Esophagus muscularis mucosa (tissue), 4 donors: ENCODE measurements at regions of chr2 and their contacts with region 1.

Region 1: DNA sequence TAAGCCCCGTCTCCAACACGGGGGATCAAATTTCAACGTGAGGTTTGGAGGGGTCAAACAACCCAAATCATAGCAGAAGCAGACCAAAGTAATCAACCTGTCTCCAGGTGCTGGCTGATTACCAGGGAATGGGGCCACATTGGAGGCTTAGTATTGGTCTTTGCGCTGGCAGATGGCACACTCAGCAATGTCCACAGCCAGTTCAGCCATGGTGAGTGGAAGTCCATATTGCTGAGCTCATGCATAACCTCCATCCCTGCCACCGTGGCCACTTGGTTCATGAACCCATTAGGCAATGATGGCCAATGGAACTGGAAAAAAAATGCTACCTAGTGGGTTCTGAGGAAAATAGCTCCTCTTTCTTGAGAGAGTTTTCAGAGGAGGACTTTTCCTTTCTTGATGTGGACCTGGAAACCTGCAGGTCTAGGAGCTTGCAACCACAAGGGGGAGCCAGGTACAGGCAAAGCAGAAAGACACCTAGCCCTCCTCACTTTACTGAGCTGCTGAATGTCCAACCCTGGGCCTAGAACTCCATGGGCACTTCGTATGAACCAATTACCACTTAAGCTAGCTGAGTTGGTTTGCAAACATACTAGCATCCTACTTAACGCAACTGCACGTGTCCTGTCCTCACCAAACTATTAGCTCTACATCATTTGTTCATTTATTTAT is 128.0 kb upstream of the GYPC start:
- DNase-seq: peak; percentile 91
- H3K4me3 ChIP-seq: no peak overlapping the region
- H3K27ac ChIP-seq: no peak overlapping the region
- H3K4me1 ChIP-seq: no peaks in the 10 kb centered on the region
- H3K27me3 ChIP-seq: no peaks in the 10 kb centered on the region
- CTCF ChIP-seq: peak; percentile 57 to 71 (median 57)
- EP300 ChIP-seq: no peak
- POLR2A ChIP-seq: no peak

Region 2: DNA sequence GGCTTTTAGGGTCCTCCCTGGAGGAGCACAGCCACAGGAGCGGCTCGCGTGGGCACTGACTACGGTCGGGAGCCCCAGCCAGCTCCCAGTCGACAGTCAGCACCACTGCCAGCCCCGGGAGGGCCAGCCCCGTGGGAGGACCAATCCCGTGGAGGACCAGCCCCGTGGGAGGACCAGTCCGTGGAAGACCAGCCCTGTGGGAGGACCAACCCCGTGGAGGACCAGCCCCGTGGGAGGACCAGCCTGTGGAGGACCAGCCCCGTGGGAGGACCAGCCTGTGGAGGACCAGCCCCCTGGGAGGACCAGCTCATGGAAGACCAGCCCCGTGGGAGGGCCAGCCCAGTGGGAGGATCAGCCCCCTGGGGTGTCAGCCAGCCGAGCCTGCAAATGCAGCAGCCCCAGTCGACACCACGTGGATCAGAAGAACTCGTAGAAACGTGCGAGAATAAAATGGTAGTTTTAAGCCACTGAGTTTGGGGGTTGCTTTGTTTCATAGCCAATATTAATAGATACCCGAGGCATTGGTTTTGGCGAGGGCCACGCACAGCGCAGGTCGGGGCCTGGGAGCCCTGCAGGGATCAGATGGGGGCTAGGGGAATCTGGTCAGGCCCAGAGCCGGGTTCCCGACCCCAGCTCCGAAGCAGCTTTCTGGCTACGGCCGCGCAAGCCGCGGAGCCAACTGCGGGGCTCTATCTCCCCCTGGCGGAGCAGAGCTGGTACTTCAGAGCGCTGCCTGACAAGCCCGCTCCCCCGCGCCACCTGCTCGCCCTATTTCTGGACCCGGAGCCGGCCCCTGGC is 443.7 kb after region 1 on chr2:
- intact Hi-C with region 1: loop called (anchors 5 kb)
- DNase-seq: no peak
- H3K4me3 ChIP-seq: peak overlapping the region; percentile 49 to 63 (median 56)
- H3K27ac ChIP-seq: peak overlapping the region; percentile 60 to 68 (median 66)
- H3K4me1 ChIP-seq: peaks cover 7 to 22% (median 21%) of the 10 kb centered on the region in 4 donors
- H3K27me3 ChIP-seq: peaks cover 0 to 4% (median 0%) of the 10 kb centered on the region in 4 donors
- CTCF ChIP-seq: peak; percentile 86 to 99 (median 88)
- EP300 ChIP-seq: no peak
- POLR2A ChIP-seq: no peak